ENCODE measurements at regions of chr21 and their contacts with region 1.

Region 1: GRCh38 chr21:15729674-15730483 is at the start of gene USP25:
- DNase-seq: peak; percentile 94
- H3K4me3 Mint-ChIP-seq: peak within 1 kb of the TSS; percentile 94
- H3K27ac Mint-ChIP-seq: peak within 1 kb of the TSS; percentile 92
- H3K4me1 Mint-ChIP-seq: peaks cover 12% of the 10 kb centered on the region
- H3K27me3 Mint-ChIP-seq: peaks cover 21% of the 10 kb centered on the region
- total RNA-seq, gene USP25: 27.3 and 29.0 TPM in 2 replicates

Region 2: GRCh38 chr21:14382835-14383594 is 1346.9 kb before region 1 on chr21 and contains the start of gene HSPA13:
- intact Hi-C with region 1: loop called (anchors 1 kb)
- DNase-seq: peak; percentile 100
- H3K4me3 Mint-ChIP-seq: peak within 1 kb of the TSS; percentile 94
- H3K27ac Mint-ChIP-seq: peak within 1 kb of the TSS; percentile 96
- H3K4me1 Mint-ChIP-seq: peaks cover 35% of the 10 kb centered on the region
- H3K27me3 Mint-ChIP-seq: peaks cover 2% of the 10 kb centered on the region
- total RNA-seq, gene HSPA13: 40.9 and 41.6 TPM in 2 replicates

Region 3: DNA sequence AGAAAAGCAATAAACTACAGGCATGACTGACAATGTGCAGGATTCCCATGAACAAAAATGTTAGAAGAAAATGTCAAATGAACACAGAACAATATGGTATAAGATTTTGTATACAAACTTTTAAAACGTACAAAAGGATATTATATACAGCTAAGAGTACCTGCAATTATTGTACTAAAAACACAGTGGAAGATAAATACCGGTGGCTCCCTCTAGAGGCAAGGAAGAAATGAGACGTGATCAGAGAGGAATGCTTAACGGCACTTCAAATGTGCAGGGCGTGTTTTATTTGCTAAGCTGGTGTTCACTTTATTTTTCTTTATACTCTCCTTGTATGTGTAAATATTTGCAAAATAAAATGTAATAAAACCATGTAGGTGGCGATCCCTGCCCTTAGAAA is 992.0 kb before region 1 on chr21:
- intact Hi-C with region 1: loop called (anchors 10 kb)
- DNase-seq: peak; percentile 87
- H3K4me3 Mint-ChIP-seq: no peak overlapping the region
- H3K27ac Mint-ChIP-seq: no peak overlapping the region
- H3K4me1 Mint-ChIP-seq: peaks cover 37% of the 10 kb centered on the region
- H3K27me3 Mint-ChIP-seq: no peaks in the 10 kb centered on the region

Region 4: GRCh38 chr21:15793547-15794235 is 63.8 kb after region 1 on chr21:
- intact Hi-C with region 1: loop called (anchors 2 kb)
- DNase-seq: no peak
- H3K4me3 Mint-ChIP-seq: no peak overlapping the region
- H3K27ac Mint-ChIP-seq: no peak overlapping the region
- H3K4me1 Mint-ChIP-seq: peaks cover 38% of the 10 kb centered on the region
- H3K27me3 Mint-ChIP-seq: no peaks in the 10 kb centered on the region

Region 5: DNA sequence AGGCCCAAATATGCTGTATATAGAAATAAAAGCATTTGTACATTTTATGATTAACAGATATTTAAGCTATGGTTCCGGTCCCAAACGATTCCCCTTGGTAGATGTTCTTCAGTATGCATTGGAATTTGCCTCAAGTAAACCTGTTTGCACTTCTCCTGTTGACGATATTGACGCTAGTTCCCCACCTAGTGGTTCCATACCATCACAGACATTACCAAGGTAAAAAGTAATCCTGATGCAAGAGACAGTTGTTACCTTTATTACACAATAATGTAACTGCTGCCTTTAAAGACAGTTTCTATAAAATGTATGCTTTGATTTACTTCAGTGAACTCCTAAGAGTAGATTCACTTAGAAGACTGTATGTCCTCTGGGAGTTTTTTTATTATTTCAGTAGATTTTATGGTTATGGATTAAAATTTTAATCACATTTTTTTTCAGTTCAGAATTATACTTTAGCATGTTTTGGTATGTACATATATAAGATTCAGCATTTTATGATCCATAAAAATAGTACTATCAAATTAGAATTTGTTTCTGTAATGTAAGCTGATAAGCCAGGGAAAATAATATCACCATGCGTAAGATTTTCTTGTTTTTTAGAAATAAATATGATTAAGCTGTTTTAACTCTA is 96.4 kb after region 1 on chr21:
- intact Hi-C with region 1: loop called (anchors 2 kb)
- DNase-seq: peak; percentile 77
- H3K4me3 Mint-ChIP-seq: no peak overlapping the region
- H3K27ac Mint-ChIP-seq: no peak overlapping the region
- H3K4me1 Mint-ChIP-seq: peaks cover 14% of the 10 kb centered on the region
- H3K27me3 Mint-ChIP-seq: no peaks in the 10 kb centered on the region